CD8-positive, alpha-beta T cell (primary cell): ENCODE measurements at regions of chr14 and their contacts with region 1.

Region 1: GRCh38 chr14:34982417-34983147 is at the start of gene SRP54:
- DNase-seq: peak; percentile 99 to 100 (median 100)
- ATAC-seq: peak; percentile 93
- H3K4me3 ChIP-seq: peak within 1 kb of the TSS; percentile 82 to 87
- H3K4me3 Mint-ChIP-seq: no peak within 1 kb of the TSS
- H3K27ac ChIP-seq: peak within 1 kb of the TSS; percentile 92 to 96
- H3K27ac Mint-ChIP-seq: no peak within 1 kb of the TSS
- H3K4me1 ChIP-seq: peaks cover 34% of the 10 kb centered on the region
- H3K4me1 Mint-ChIP-seq: peaks cover 33% of the 10 kb centered on the region
- H3K27me3 ChIP-seq: no peaks in the 10 kb centered on the region
- H3K27me3 Mint-ChIP-seq: no peaks in the 10 kb centered on the region
- CTCF ChIP-seq: no peak
- total RNA-seq, gene SRP54: 40.4 to 42.4 TPM

Region 2: GRCh38 chr14:34461334-34462131 is 521.0 kb before region 1 on chr14:
- CTCF ChIA-PET with region 1: no interaction called
- POLR2A ChIA-PET with region 1: no interaction called
- intact Hi-C with region 1: loop called (anchors 5 kb)
- DNase-seq: peak in 7 of 9 experiments; percentile 1 to 50 (median 22)
- ATAC-seq: peak; percentile 1
- H3K4me3 ChIP-seq: peak overlapping the region; percentile 51 to 70
- H3K4me3 Mint-ChIP-seq: peak overlapping the region; percentile 87
- H3K27ac ChIP-seq: peak overlapping the region; percentile 53 to 63
- H3K27ac Mint-ChIP-seq: peak overlapping the region; percentile 82
- H3K4me1 ChIP-seq: peaks cover 19% of the 10 kb centered on the region
- H3K4me1 Mint-ChIP-seq: peaks cover 20% of the 10 kb centered on the region
- H3K27me3 ChIP-seq: no peaks in the 10 kb centered on the region
- H3K27me3 Mint-ChIP-seq: no peaks in the 10 kb centered on the region
- CTCF ChIP-seq: no peak

Region 3: GRCh38 chr14:34676516-34677222 is 305.9 kb before region 1 on chr14:
- CTCF ChIA-PET with region 1: interaction called, 4 read pairs
- POLR2A ChIA-PET with region 1: no interaction called
- intact Hi-C with region 1: loop called in 1 of 2 experiments (anchors 2 kb)
- DNase-seq: no peak
- ATAC-seq: no peak
- H3K4me3 ChIP-seq: no peak overlapping the region
- H3K4me3 Mint-ChIP-seq: no peak overlapping the region
- H3K27ac ChIP-seq: no peak overlapping the region
- H3K27ac Mint-ChIP-seq: no peak overlapping the region
- H3K4me1 ChIP-seq: no peaks in the 10 kb centered on the region
- H3K4me1 Mint-ChIP-seq: no peaks in the 10 kb centered on the region
- H3K27me3 ChIP-seq: no peaks in the 10 kb centered on the region
- H3K27me3 Mint-ChIP-seq: no peaks in the 10 kb centered on the region
- CTCF ChIP-seq: no peak

Region 4: GRCh38 chr14:34931206-34931605 is 51.4 kb before region 1 on chr14:
- CTCF ChIA-PET with region 1: interaction called, 4 read pairs
- POLR2A ChIA-PET with region 1: interaction called, 32 read pairs
- intact Hi-C with region 1: loop called (anchors 1 to 2 kb)
- DNase-seq: peak in 7 of 9 experiments; percentile 9 to 87 (median 59)
- ATAC-seq: peak; percentile 90
- H3K4me3 ChIP-seq: peak overlapping the region in 1 of 2 experiments; percentile 4
- H3K4me3 Mint-ChIP-seq: peak overlapping the region; percentile 49
- H3K27ac ChIP-seq: peak overlapping the region; percentile 87 to 93
- H3K27ac Mint-ChIP-seq: peak overlapping the region; percentile 97
- H3K4me1 ChIP-seq: peaks cover 28% of the 10 kb centered on the region
- H3K4me1 Mint-ChIP-seq: peaks cover 30% of the 10 kb centered on the region
- H3K27me3 ChIP-seq: no peaks in the 10 kb centered on the region
- H3K27me3 Mint-ChIP-seq: no peaks in the 10 kb centered on the region
- CTCF ChIP-seq: no peak

Region 5: GRCh38 chr14:35046048-35046741 is 63.6 kb after region 1 on chr14 and contains the start of gene FAM177A1:
- CTCF ChIA-PET with region 1: interaction called, 7 read pairs
- POLR2A ChIA-PET with region 1: interaction called, 37 read pairs
- intact Hi-C with region 1: loop called (anchors 1 kb)
- DNase-seq: peak; percentile 97 to 100 (median 99)
- ATAC-seq: peak; percentile 83
- H3K4me3 ChIP-seq: peak within 1 kb of the TSS; percentile 81 to 96
- H3K4me3 Mint-ChIP-seq: peak within 1 kb of the TSS; percentile 82
- H3K27ac ChIP-seq: peak within 1 kb of the TSS; percentile 96 to 100
- H3K27ac Mint-ChIP-seq: peak within 1 kb of the TSS; percentile 98
- H3K4me1 ChIP-seq: peaks cover 20% of the 10 kb centered on the region
- H3K4me1 Mint-ChIP-seq: peaks cover 28% of the 10 kb centered on the region
- H3K27me3 ChIP-seq: no peaks in the 10 kb centered on the region
- H3K27me3 Mint-ChIP-seq: no peaks in the 10 kb centered on the region
- CTCF ChIP-seq: no peak
- total RNA-seq, gene FAM177A1: 227 to 230 TPM

Region 6: GRCh38 chr14:35416108-35416750 is 433.6 kb after region 1 on chr14:
- CTCF ChIA-PET with region 1: no interaction called
- POLR2A ChIA-PET with region 1: no interaction called
- intact Hi-C with region 1: loop called (anchors 5 kb)
- DNase-seq: peak in 8 of 9 experiments; percentile 35 to 94 (median 62)
- ATAC-seq: peak; percentile 48
- H3K4me3 ChIP-seq: peak overlapping the region; percentile 9 to 15
- H3K4me3 Mint-ChIP-seq: peak overlapping the region; percentile 55
- H3K27ac ChIP-seq: peak overlapping the region; percentile 17 to 85
- H3K27ac Mint-ChIP-seq: peak overlapping the region; percentile 90
- H3K4me1 ChIP-seq: peaks cover 35% of the 10 kb centered on the region
- H3K4me1 Mint-ChIP-seq: peaks cover 44% of the 10 kb centered on the region
- H3K27me3 ChIP-seq: no peaks in the 10 kb centered on the region
- H3K27me3 Mint-ChIP-seq: no peaks in the 10 kb centered on the region
- CTCF ChIP-seq: no peak